IMR-90 (cell line): ENCODE measurements at regions of chr5 and their contacts with region 1.

Region 1: DNA sequence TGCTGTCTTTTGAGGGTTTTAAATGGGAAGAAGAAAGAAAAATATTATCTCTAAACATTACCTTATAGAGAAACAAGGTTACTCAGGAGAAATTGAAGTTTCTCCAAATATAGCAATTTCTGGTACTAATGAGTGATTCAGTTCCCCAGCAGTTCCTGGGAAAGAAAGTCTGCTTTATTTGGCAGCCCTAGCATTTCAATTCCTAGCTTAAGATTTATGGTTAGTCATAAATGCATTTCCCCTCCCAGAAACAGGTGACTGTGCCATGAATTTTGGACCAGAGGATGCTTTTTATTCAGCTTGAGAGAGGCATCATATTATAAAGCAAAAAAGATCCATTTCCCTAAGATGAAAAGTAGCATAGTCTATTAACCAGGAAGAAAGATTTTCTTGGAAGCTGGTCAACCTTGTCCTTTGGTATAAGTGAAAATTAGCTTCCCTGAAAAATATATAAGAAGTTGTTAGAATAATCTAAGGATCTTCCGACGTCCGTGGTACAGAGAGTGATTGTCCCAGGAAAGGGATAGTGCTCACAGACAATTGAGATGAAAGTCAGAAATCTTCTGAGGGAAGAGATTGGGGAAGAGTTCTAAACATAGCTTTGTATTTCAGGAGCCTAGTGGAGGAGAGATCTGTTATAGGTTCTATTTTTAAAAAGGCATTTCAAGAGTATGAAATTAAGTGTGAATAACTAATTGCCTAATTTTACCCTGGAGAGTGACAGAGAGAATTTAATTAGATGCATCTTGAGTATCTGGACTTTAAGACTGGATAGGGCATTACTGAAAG is 164.9 kb downstream of the ESM1 start:
- DNase-seq: peak; percentile 62
- ATAC-seq: peak; percentile 17; the same call in 1 of the 2 replicates
- H3K4me3 ChIP-seq: no peak overlapping the region
- H3K27ac ChIP-seq: peak overlapping the region; percentile 98
- H3K4me1 ChIP-seq: peaks cover 27% of the 10 kb centered on the region
- H3K27me3 ChIP-seq: no peaks in the 10 kb centered on the region
- CTCF ChIP-seq: no peak
- POLR2A ChIP-seq: no peak
- RAD21 ChIP-seq: no peak

Region 2: GRCh38 chr5:54727874-54728587 is 92.5 kb before region 1 on chr5:
- CTCF ChIA-PET with region 1: no interaction called
- POLR2A ChIA-PET with region 1: no interaction called
- dilution Hi-C with region 1: no loop called
- in situ Hi-C with region 1: no loop called
- intact Hi-C with region 1: no loop called
- DNase-seq: no peak
- ATAC-seq: no peak
- H3K4me3 ChIP-seq: no peak overlapping the region
- H3K27ac ChIP-seq: no peak overlapping the region
- H3K4me1 ChIP-seq: peaks cover 6% of the 10 kb centered on the region
- H3K27me3 ChIP-seq: no peaks in the 10 kb centered on the region
- CTCF ChIP-seq: no peak
- POLR2A ChIP-seq: no peak
- RAD21 ChIP-seq: no peak

Region 3: DNA sequence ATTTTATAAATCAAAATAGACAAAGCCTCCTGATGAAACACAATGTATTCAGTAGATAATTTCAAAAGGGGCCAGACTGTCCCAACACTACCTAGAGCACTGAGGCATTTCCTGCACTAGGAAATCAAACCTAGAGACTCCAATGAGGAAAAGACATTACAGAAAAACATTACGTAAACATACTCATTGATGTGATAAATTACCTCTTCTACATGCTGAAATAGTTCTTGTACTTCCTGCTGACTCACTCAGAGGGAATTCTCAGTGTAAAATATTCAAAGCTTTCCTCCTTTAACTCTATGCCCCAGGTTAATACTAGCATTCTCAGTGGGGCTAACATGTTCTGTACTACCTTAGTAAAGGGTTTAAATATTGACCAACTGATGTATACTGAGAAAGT is 13.1 kb before region 1 on chr5:
- CTCF ChIA-PET with region 1: interaction called, 4 read pairs
- POLR2A ChIA-PET with region 1: no interaction called
- dilution Hi-C with region 1: no loop called
- in situ Hi-C with region 1: no loop called
- intact Hi-C with region 1: loop called (anchors 2 kb)
- DNase-seq: peak; percentile 86
- ATAC-seq: peak; percentile 91
- H3K4me3 ChIP-seq: no peak overlapping the region
- H3K27ac ChIP-seq: peak overlapping the region; percentile 82
- H3K4me1 ChIP-seq: peaks cover 11% of the 10 kb centered on the region
- H3K27me3 ChIP-seq: no peaks in the 10 kb centered on the region
- CTCF ChIP-seq: no peak
- POLR2A ChIP-seq: no peak
- RAD21 ChIP-seq: no peak